ENCODE measurements at regions of chr7 and their contacts with region 1.

Region 1: DNA sequence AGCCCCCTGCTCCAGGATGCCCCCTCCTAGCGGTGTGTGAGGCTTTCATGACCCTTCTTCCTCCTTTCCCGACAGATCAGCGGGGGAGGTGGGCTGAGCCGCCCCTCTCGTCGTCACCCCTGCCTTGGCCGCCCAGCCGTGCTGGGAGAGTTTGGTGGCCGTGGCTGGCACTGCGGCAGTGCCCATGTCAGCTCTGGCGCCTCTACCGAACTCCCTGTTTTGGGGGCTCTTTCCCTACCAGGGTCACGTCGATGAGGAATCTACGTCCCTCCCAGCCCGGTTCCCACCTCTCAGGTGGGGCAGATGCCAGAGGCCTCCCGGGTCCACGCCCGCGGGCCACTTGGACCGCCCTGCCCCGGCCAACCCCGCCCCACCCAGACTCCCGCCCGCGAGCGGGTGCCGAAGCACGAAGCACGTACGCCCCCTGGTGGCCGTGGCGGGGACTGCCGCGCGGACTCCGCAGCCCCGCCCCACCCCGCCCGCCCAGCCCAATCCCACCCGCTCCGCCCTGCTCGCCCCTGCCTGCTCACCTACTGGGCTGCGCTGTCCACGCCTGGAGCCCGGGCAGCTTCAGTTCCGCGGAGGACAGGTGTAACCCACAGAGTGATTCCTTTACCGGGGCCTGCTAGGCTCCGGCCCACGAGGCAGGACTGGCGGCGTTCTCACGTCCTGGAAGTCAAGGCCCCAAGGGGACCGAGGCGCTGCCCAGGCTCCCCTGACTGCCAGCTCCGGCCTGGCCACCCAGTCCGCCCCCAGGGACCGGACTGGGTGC is 127.1 kb downstream of the UBE2H start:
- DNase-seq: peak; percentile 91
- ATAC-seq: peak; percentile 26
- H3K4me3 Mint-ChIP-seq: peak overlapping the region; percentile 85
- H3K27ac Mint-ChIP-seq: no peak overlapping the region
- H3K4me1 Mint-ChIP-seq: peaks cover 35% of the 10 kb centered on the region
- H3K27me3 Mint-ChIP-seq: no peaks in the 10 kb centered on the region; the same call in 1 of the 2 replicates
- CTCF ChIP-seq: peak; percentile 99

Region 2: GRCh38 chr7:129611246-129612111 is 214.2 kb before region 1 on chr7 and contains the start of gene NRF1:
- CTCF ChIA-PET with region 1: interaction called, 35 read pairs
- POLR2A ChIA-PET with region 1: interaction called, 3 read pairs
- DNase-seq: peak; percentile 84
- ATAC-seq: peak; percentile 72
- H3K4me3 Mint-ChIP-seq: peak within 1 kb of the TSS; percentile 94
- H3K27ac Mint-ChIP-seq: peak within 1 kb of the TSS; percentile 91
- H3K4me1 Mint-ChIP-seq: peaks cover 28% of the 10 kb centered on the region
- H3K27me3 Mint-ChIP-seq: no peaks in the 10 kb centered on the region
- CTCF ChIP-seq: no peak
- total RNA-seq, gene NRF1: 16.4 to 18.3 TPM (median 16.4 TPM) in 3 replicates

Region 3: GRCh38 chr7:129664029-129665012 is 161.4 kb before region 1 on chr7:
- CTCF ChIA-PET with region 1: interaction called, 21 read pairs
- POLR2A ChIA-PET with region 1: no interaction called
- DNase-seq: no peak
- ATAC-seq: no peak
- H3K4me3 Mint-ChIP-seq: no peak overlapping the region
- H3K27ac Mint-ChIP-seq: peak overlapping the region; percentile 81; the same call in 1 of the 2 replicates
- H3K4me1 Mint-ChIP-seq: peaks cover 11% of the 10 kb centered on the region
- H3K27me3 Mint-ChIP-seq: no peaks in the 10 kb centered on the region
- CTCF ChIP-seq: no peak

Region 4: GRCh38 chr7:129755555-129755954 is 70.1 kb before region 1 on chr7:
- CTCF ChIA-PET with region 1: interaction called, 18 read pairs
- POLR2A ChIA-PET with region 1: no interaction called
- DNase-seq: no peak
- ATAC-seq: no peak
- H3K4me3 Mint-ChIP-seq: no peak overlapping the region
- H3K27ac Mint-ChIP-seq: peak overlapping the region; percentile 10; the same call in 1 of the 2 replicates
- H3K4me1 Mint-ChIP-seq: peaks cover 19% of the 10 kb centered on the region
- H3K27me3 Mint-ChIP-seq: no peaks in the 10 kb centered on the region
- CTCF ChIP-seq: no peak

Region 5: DNA sequence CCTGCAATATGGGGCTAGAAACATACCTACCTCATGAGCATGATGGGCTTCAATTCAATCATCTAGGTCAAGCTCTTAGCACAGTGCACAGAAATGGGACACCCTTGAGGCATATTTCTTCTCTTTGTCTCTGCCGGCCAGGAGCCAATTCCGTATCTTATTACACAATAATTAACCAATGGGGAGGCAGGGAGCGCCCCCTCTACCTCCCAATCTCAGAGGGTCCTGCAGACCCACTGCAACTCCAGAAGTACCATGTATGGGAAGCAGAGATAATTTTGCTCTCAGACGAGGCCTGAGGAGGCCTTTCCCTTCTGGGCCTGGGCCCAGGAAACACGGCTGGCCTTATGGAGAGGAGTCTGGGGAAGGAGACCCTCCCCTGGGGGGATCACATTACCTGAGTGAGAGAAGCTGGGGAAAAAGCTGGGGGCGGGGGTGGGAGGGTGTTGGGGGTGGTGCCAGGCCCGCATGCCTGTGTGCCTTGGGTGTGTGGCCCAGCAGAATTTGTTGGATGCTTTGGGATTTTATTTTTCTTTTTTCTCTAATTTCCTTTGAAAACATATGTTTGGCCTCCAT is 28.4 kb before region 1 on chr7:
- CTCF ChIA-PET with region 1: interaction called, 15 read pairs
- POLR2A ChIA-PET with region 1: no interaction called
- DNase-seq: peak; percentile 41
- ATAC-seq: peak; percentile 53
- H3K4me3 Mint-ChIP-seq: no peak overlapping the region
- H3K27ac Mint-ChIP-seq: peak overlapping the region; percentile 53; the same call in 1 of the 2 replicates
- H3K4me1 Mint-ChIP-seq: peaks cover 41% of the 10 kb centered on the region
- H3K27me3 Mint-ChIP-seq: peaks cover 13% of the 10 kb centered on the region
- CTCF ChIP-seq: no peak

Region 6: GRCh38 chr7:129952653-129953560 is 127.2 kb after region 1 on chr7 and contains the start of gene UBE2H:
- CTCF ChIA-PET with region 1: interaction called, 7 read pairs
- POLR2A ChIA-PET with region 1: interaction called, 11 read pairs
- DNase-seq: peak; percentile 91
- ATAC-seq: peak; percentile 61
- H3K4me3 Mint-ChIP-seq: peak within 1 kb of the TSS; percentile 95
- H3K27ac Mint-ChIP-seq: peak within 1 kb of the TSS; percentile 99
- H3K4me1 Mint-ChIP-seq: peaks cover 15% of the 10 kb centered on the region
- H3K27me3 Mint-ChIP-seq: no peaks in the 10 kb centered on the region; the same call in 1 of the 2 replicates
- CTCF ChIP-seq: no peak
- total RNA-seq, gene UBE2H: 55.0 to 65.8 TPM (median 63.4 TPM) in 3 replicates